CD14-positive monocyte (primary cell): ENCODE measurements at regions of chr14 and their contacts with region 1.

Region 1: GRCh38 chr14:60174352-60175245 is 9.4 kb upstream of the DHRS7 start:
- DNase-seq: no peak
- H3K4me3 ChIP-seq: no peak overlapping the region
- H3K4me3 Mint-ChIP-seq: no peak overlapping the region
- H3K27ac ChIP-seq: no peak overlapping the region
- H3K27ac Mint-ChIP-seq: no peak overlapping the region
- H3K4me1 ChIP-seq: peaks cover 3 to 20% of the 10 kb centered on the region in 2 donors
- H3K4me1 Mint-ChIP-seq: peaks cover 14% of the 10 kb centered on the region
- H3K27me3 ChIP-seq: no peaks in the 10 kb centered on the region
- H3K27me3 Mint-ChIP-seq: peaks cover 0 to 3% (median 0%) of the 10 kb centered on the region in 3 donors
- CTCF ChIP-seq: no peak

Region 2: GRCh38 chr14:60079724-60080123 is 94.9 kb before region 1 on chr14:
- intact Hi-C with region 1: loop called in 1 of 2 experiments (anchors 5 kb)
- DNase-seq: no peak
- H3K4me3 ChIP-seq: no peak overlapping the region
- H3K4me3 Mint-ChIP-seq: no peak overlapping the region
- H3K27ac ChIP-seq: no peak overlapping the region
- H3K27ac Mint-ChIP-seq: no peak overlapping the region
- H3K4me1 ChIP-seq: no peaks in the 10 kb centered on the region
- H3K4me1 Mint-ChIP-seq: no peaks in the 10 kb centered on the region
- H3K27me3 ChIP-seq: no peaks in the 10 kb centered on the region
- H3K27me3 Mint-ChIP-seq: no peaks in the 10 kb centered on the region
- CTCF ChIP-seq: no peak